ENCODE measurements at regions of chr18 and their contacts with region 1.

Region 1: DNA sequence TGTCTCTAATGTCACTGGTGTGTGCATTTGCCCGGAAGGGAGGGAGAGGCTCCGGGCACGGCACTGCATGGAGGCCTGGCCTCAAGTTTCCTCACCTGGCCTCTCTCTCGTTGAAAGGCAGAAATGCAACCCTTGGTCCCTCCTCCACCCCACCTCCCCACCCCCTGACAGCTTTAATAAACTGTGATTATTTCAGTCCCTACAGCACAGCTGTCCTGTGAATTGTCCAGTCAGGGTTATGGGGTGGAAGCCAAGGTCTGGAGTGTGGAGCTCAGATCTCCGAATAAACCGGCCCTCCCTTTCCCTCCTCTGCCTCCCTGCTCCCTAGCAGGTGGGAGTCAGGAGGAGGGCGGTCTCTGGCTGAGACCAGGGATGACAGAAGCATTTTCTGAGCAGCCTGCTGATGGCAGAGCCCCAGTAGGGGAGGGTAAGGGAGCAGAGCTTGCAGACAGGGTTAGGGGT is 199.2 kb upstream of the SMAD2 start:
- DNase-seq: peak in 3 of 7 donors; percentile 39 to 43 (median 40)
- H3K4me3 ChIP-seq: no peak overlapping the region
- H3K27ac ChIP-seq: peak overlapping the region in 3 of 5 donors; percentile 10 to 64 (median 39)
- H3K4me1 ChIP-seq: peaks cover 27 to 42% of the 10 kb centered on the region in 2 donors
- H3K27me3 ChIP-seq: no peaks in the 10 kb centered on the region
- CTCF ChIP-seq: no peak
- POLR2A ChIP-seq: no peak

Region 2: GRCh38 chr18:48030616-48031480 is 98.8 kb before region 1 on chr18:
- intact Hi-C with region 1: loop called in 1 of 2 experiments (anchors 10 kb)
- DNase-seq: peak; percentile 69 to 87 (median 76)
- H3K4me3 ChIP-seq: no peak overlapping the region
- H3K27ac ChIP-seq: peak overlapping the region in 2 of 5 donors; percentile 35 to 40
- H3K4me1 ChIP-seq: peaks cover 33 to 49% of the 10 kb centered on the region in 2 donors
- H3K27me3 ChIP-seq: no peaks in the 10 kb centered on the region
- CTCF ChIP-seq: peak; percentile 50 to 83 (median 80)
- POLR2A ChIP-seq: no peak

Measured in adrenal gland (tissue), 19 donors.